CD8-positive, alpha-beta memory T cell (primary cell): ENCODE measurements at regions of chr15 and their contacts with region 1.

Region 1: GRCh38 chr15:91706322-91707032 is 147.0 kb upstream of the SLCO3A1 start:
- DNase-seq: peak; percentile 59 to 86 (median 71)
- H3K4me3 ChIP-seq: no peak overlapping the region
- H3K4me3 Mint-ChIP-seq: peak overlapping the region; percentile 1 to 88 (median 64)
- H3K27ac ChIP-seq: no peak overlapping the region
- H3K27ac Mint-ChIP-seq: peak overlapping the region; percentile 66 to 92 (median 84)
- H3K4me1 ChIP-seq: peaks cover 14% of the 10 kb centered on the region
- H3K4me1 Mint-ChIP-seq: peaks cover 17 to 24% (median 18%) of the 10 kb centered on the region in 3 donors
- H3K27me3 ChIP-seq: no peaks in the 10 kb centered on the region
- H3K27me3 Mint-ChIP-seq: peaks cover 4 to 6% of the 10 kb centered on the region in 2 donors

Region 2: GRCh38 chr15:91632176-91632575 is 74.3 kb before region 1 on chr15:
- CTCF ChIA-PET with region 1: no interaction called
- POLR2A ChIA-PET with region 1: no interaction called
- DNase-seq: no peak
- H3K4me3 ChIP-seq: no peak overlapping the region
- H3K4me3 Mint-ChIP-seq: no peak overlapping the region
- H3K27ac ChIP-seq: no peak overlapping the region
- H3K27ac Mint-ChIP-seq: no peak overlapping the region
- H3K4me1 ChIP-seq: no peaks in the 10 kb centered on the region
- H3K4me1 Mint-ChIP-seq: no peaks in the 10 kb centered on the region
- H3K27me3 ChIP-seq: no peaks in the 10 kb centered on the region
- H3K27me3 Mint-ChIP-seq: peaks cover 5 to 14% of the 10 kb centered on the region in 2 donors

Region 3: GRCh38 chr15:91717811-91718210 is 11.3 kb after region 1 on chr15:
- CTCF ChIA-PET with region 1: interaction called, 10 read pairs
- POLR2A ChIA-PET with region 1: no interaction called
- DNase-seq: no peak
- H3K4me3 ChIP-seq: no peak overlapping the region
- H3K4me3 Mint-ChIP-seq: no peak overlapping the region
- H3K27ac ChIP-seq: no peak overlapping the region
- H3K27ac Mint-ChIP-seq: no peak overlapping the region
- H3K4me1 ChIP-seq: no peaks in the 10 kb centered on the region
- H3K4me1 Mint-ChIP-seq: no peaks in the 10 kb centered on the region
- H3K27me3 ChIP-seq: no peaks in the 10 kb centered on the region
- H3K27me3 Mint-ChIP-seq: peaks cover 11 to 68% of the 10 kb centered on the region in 2 donors

Region 4: GRCh38 chr15:91942676-91943576 is 236.4 kb after region 1 on chr15:
- CTCF ChIA-PET with region 1: interaction called, 15 read pairs
- POLR2A ChIA-PET with region 1: no interaction called
- DNase-seq: peak in 4 of 5 donors; percentile 9 to 54 (median 31)
- H3K4me3 ChIP-seq: no peak overlapping the region
- H3K4me3 Mint-ChIP-seq: peak overlapping the region in 6 of 7 donors; percentile 66 to 79 (median 70)
- H3K27ac ChIP-seq: no peak overlapping the region
- H3K27ac Mint-ChIP-seq: peak overlapping the region; percentile 58 to 96 (median 82)
- H3K4me1 ChIP-seq: peaks cover 14% of the 10 kb centered on the region
- H3K4me1 Mint-ChIP-seq: peaks cover 66 to 96% (median 82%) of the 10 kb centered on the region in 3 donors
- H3K27me3 ChIP-seq: no peaks in the 10 kb centered on the region
- H3K27me3 Mint-ChIP-seq: no peaks in the 10 kb centered on the region

Region 5: DNA sequence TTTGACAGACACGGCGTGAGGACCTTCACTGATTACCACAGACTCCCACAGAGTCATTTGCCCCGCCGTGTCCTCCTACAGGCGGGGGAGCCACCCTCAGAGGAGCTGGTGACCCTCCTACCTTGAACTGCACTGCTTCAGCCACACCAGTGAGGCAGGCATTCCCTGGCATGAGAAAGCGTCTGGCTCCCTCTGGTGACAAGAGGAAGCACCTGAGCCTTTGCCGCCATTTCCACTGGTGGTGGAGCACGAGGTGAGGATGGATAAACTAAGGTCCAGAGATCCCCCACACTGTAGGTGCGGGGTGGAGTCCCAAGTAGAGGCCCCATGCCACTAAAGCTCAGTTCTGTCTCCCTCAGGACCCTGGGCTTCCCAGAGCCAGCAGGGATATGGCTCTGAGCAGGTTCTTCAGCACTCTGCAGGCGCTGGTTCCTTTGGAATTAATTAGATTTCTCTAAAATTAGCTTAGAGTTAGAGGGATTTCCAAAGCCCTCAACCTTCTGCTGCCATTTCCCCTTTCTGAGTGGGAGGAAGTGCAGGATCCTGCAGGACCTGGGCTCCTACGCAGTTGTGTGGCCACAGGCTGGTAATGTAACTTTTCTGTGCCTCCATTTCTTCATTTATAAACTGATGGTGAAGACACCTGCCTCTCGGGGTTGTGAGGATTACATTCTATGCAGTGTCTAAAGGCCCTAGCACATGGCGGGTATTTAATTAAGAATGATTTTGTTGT is 371.0 kb after region 1 on chr15:
- CTCF ChIA-PET with region 1: interaction called, 15 read pairs
- POLR2A ChIA-PET with region 1: no interaction called
- DNase-seq: peak; percentile 21 to 67 (median 28)
- H3K4me3 ChIP-seq: no peak overlapping the region
- H3K4me3 Mint-ChIP-seq: no peak overlapping the region
- H3K27ac ChIP-seq: no peak overlapping the region
- H3K27ac Mint-ChIP-seq: peak overlapping the region in 2 of 8 donors; percentile 29 to 33
- H3K4me1 ChIP-seq: peaks cover 13% of the 10 kb centered on the region
- H3K4me1 Mint-ChIP-seq: peaks cover 32 to 49% (median 40%) of the 10 kb centered on the region in 3 donors
- H3K27me3 ChIP-seq: no peaks in the 10 kb centered on the region
- H3K27me3 Mint-ChIP-seq: no peaks in the 10 kb centered on the region